Dorsolateral prefrontal cortex (tissue), 120 donors: ENCODE measurements at regions of chr4 and their contacts with region 1.

Region 1: GRCh38 chr4:153127760-153128494 is 76.3 kb upstream of the TRIM2 start:
- DNase-seq: peak; percentile 76 to 98 (median 91)
- H3K4me3 ChIP-seq: peak overlapping the region in 58 of 59 donors; percentile 14 to 66 (median 48)
- H3K27ac ChIP-seq: peak overlapping the region in 58 of 59 donors; percentile 73 to 99 (median 91)
- H3K27me3 ChIP-seq: no peaks in the 10 kb centered on the region
- CTCF ChIP-seq: peak; percentile 80 to 97 (median 92)

Region 2: GRCh38 chr4:152779513-152780266 is 348.2 kb before region 1 on chr4 and contains the starts of genes ARFIP1 and TIGD4:
- intact Hi-C with region 1: loop called in 1 of 2 experiments (anchors 10 kb)
- DNase-seq: peak; percentile 97 to 100 (median 98)
- H3K4me3 ChIP-seq: peak within 1 kb of the TSS; percentile 62 to 100 (median 89)
- H3K27ac ChIP-seq: peak within 1 kb of the TSS; percentile 45 to 95 (median 87)
- H3K27me3 ChIP-seq: no peaks in the 10 kb centered on the region
- CTCF ChIP-seq: peak in 53 of 56 donors; percentile 22 to 78 (median 50)
- total RNA-seq, gene ARFIP1: 13.8 to 37.2 (median 23.3) TPM
- total RNA-seq, gene TIGD4: 0.74 to 3.5 (median 1.9) TPM

Region 3: DNA sequence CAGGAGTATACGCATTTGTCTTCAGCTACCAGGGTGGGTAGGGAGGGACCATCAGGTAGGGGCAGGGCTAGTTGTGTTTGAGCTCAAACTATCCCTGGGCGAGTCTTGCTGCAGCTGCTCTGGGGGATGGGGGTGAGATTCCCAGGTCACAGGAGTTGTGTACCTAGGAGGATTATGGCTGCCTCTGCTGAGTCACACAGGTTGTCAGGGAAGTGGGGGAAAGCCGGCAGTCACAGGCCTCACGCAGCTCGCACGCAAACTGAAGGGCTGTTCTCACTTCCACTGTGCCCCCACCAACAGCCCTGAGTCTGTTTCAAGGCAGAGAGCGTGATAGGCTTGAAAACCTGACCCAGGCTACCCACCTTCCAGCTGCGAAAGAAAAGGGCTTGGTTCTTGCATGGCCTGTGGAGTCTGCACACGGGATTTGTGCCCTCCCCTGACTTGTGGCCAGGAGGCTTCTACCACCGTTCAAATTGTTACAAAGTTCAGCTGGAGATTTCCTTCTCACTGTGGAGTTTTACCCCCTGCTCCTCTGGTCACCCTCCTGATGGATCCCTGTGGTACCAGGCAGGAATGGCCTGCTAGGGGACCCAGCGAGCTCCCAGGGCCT is 284.3 kb before region 1 on chr4:
- intact Hi-C with region 1: loop called (anchors 2 to 5 kb)
- DNase-seq: no peak
- H3K4me3 ChIP-seq: no peak overlapping the region
- H3K27ac ChIP-seq: no peak overlapping the region
- H3K27me3 ChIP-seq: no peaks in the 10 kb centered on the region
- CTCF ChIP-seq: no peak

Region 4: DNA sequence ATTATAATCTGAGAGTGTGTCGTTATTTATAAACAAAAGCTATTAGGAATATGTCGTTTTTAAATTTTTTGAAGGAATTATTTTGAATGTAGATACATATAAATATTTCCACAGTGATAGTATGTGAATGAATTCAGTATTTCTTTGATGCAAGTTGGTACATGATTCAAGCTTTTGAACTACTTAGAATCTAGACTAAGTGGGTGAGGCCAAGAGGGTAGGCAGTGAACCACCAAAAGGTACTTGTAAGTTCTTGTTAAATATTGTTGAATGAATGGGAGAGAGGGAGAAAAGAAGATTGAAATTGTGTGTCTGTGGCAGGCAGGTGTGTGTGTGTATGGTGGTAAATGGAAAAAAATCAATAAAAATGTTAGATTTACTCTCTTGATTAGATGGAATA is 278.6 kb before region 1 on chr4:
- intact Hi-C with region 1: loop called (anchors 2 to 5 kb)
- DNase-seq: no peak
- H3K4me3 ChIP-seq: no peak overlapping the region
- H3K27ac ChIP-seq: no peak overlapping the region
- H3K27me3 ChIP-seq: no peaks in the 10 kb centered on the region
- CTCF ChIP-seq: no peak

Region 5: DNA sequence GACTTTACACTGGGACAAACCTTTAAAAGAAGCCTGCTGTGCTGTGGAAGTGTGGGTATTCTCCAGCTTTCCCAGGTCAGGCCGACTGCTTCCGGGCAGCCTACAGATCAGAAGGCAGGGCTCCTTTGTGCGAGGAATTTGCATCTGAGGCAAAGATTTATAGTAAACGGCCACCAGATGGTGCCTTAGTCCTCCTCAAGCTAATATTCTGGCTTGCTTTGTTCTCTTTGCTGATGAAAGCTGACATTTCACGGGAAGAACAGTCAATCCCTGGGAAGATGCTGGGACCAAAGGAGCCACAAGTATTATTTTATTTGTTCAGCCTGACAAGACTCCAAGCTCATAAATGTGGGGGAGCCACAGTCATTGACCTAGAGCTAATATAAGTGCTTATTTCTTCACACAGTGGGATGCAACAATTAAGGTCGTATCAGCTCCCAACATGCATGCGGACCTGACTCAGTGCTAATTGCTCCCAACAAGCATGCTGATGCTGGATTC is 44.4 kb before region 1 on chr4:
- intact Hi-C with region 1: loop called (anchors 1 kb)
- DNase-seq: peak in 9 of 10 donors; percentile 42 to 74 (median 59)
- H3K4me3 ChIP-seq: peak overlapping the region in 4 of 59 donors; percentile 4 to 12 (median 6)
- H3K27ac ChIP-seq: peak overlapping the region in 57 of 59 donors; percentile 10 to 100 (median 97)
- H3K27me3 ChIP-seq: no peaks in the 10 kb centered on the region
- CTCF ChIP-seq: peak; percentile 60 to 93 (median 81)